Activated B cell treated with CpG ODN at 0.5 μM for 24 hours (primary cell): ENCODE measurements at regions of chr11 and their contacts with region 1.

Region 1: DNA sequence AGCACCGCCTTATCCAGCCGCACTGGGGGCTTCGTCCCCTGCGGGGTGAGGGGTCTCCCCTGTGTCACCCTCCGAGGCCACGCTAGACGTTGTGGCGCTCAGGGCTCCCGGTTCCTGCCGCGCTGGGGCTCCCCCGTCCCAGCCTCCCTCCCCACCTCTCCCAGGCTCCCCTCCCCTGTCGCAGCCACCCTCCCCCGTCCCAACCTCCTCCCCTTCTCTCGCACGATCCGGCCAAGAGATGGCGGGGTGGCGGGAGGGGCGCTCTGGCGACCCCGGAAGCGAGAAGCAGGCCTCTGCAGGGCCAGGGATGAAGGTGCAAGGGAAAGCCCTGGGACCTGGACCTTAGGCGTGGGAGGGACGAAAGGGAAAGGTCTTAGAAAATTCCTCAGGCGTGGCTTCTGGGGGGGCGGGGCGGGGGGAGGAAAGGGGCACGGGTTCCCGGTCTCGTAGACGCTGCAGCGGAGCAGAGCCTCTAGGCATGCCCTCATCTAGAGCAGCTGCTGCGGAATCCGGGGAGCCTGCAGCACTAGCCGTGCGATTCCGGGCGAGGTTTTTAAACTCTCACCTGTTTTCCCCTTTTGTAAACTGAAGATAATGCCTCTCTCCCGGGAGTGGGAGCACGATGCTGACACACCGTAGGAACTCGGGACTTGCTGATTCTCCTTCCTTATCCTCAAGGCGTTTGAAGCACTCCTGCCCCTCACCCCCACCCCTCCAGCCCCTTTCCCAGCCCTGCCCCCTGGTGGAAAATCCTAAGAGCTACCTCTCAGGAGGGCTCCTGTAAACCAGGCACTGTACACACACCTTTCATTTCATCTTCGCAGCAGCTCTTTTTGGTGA is 14.4 kb downstream of the KCNJ5 start:
- DNase-seq: peak; percentile 48
- ATAC-seq: peak; percentile 56
- H3K4me3 Mint-ChIP-seq: peak overlapping the region; percentile 79
- H3K27ac Mint-ChIP-seq: no peak overlapping the region
- H3K4me1 Mint-ChIP-seq: peaks cover 26% of the 10 kb centered on the region
- H3K27me3 Mint-ChIP-seq: peaks cover 48% of the 10 kb centered on the region
- CTCF ChIP-seq: no peak

Region 2: DNA sequence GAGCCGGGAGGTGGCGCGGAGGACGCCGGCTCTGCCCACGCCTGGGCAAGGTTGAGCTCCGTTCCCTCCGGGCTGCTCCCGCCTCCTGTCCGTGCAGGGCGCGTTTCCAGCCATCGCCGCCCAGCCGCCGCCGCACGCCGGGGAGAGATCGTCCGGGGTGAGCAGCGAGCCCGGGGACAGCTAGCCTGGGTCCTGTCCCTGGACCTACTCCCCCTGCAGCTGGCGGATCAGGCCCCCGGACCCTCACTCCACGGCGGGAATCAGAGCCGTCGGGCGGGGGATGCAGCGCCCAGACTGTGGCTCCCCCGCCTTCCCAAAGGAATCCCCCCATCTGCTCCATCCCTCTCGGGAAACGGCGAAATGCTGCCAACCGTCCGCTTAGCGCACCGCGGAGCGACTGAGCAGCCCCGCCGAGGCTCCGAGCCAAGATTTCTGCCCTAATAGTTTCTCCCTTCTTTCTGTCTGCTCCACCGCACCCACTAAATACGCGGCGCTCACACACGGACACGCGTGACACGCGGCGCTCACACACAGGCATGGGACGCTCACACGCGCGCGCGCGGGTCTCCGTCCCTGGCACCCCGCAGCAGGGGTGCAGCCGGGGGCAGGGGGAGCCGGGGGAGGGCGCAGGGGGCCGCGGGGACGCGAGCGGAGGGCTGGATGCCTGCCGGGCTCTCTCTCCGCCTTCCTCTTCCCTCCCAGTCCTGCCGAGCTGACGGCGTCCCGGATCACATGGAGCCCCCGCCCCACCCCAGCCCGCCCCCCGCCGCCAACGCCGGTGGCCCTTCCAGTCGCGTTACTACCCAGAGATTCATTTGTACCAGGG is 14.8 kb before region 1 on chr11 and contains the start of gene KCNJ5:
- CTCF ChIA-PET with region 1: interaction called, 30 read pairs
- POLR2A ChIA-PET with region 1: no interaction called
- intact Hi-C with region 1: loop called (anchors 1 kb)
- DNase-seq: no peak
- ATAC-seq: peak; percentile 28
- H3K4me3 Mint-ChIP-seq: peak within 1 kb of the TSS; percentile 75
- H3K27ac Mint-ChIP-seq: no peak within 1 kb of the TSS
- H3K4me1 Mint-ChIP-seq: peaks cover 26% of the 10 kb centered on the region
- H3K27me3 Mint-ChIP-seq: peaks cover 68% of the 10 kb centered on the region
- CTCF ChIP-seq: no peak
- total RNA-seq, gene KCNJ5: not detected in 2 replicates

Region 3: DNA sequence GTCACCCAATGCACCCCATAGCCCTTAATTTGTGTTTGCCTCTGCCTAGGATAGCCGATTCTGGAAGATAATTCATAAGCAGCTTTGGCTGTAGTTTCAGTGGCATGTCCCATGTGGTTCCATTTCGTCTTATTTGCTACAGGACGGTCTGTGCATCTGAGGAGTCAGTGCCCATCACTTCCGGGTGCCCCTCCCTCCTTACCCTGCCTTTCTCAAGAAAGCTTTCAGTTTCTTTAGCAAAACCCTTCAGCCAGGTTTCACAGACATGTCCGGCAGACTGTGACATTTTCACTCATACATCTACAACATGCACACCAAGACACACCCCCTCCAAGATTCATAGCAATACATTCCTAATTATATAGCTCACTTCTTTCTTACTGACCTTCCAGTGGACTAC is 22.8 kb after region 1 on chr11:
- CTCF ChIA-PET with region 1: interaction called, 4 read pairs
- POLR2A ChIA-PET with region 1: interaction called, 3 read pairs
- intact Hi-C with region 1: loop called (anchors 2 kb)
- DNase-seq: no peak
- ATAC-seq: peak; percentile 85
- H3K4me3 Mint-ChIP-seq: peak overlapping the region; percentile 6
- H3K27ac Mint-ChIP-seq: no peak overlapping the region
- H3K4me1 Mint-ChIP-seq: peaks cover 17% of the 10 kb centered on the region
- H3K27me3 Mint-ChIP-seq: peaks cover 10% of the 10 kb centered on the region
- CTCF ChIP-seq: no peak